Dendritic cell treated with granulocyte-macrophage colony-stimulating factor and Interleukin-4, amounts not matched to agents 40 ng/mL and 50 ng/mL, for 4 days (primary cell): ENCODE measurements at regions of chr6 and their contacts with region 1.

Region 1: DNA sequence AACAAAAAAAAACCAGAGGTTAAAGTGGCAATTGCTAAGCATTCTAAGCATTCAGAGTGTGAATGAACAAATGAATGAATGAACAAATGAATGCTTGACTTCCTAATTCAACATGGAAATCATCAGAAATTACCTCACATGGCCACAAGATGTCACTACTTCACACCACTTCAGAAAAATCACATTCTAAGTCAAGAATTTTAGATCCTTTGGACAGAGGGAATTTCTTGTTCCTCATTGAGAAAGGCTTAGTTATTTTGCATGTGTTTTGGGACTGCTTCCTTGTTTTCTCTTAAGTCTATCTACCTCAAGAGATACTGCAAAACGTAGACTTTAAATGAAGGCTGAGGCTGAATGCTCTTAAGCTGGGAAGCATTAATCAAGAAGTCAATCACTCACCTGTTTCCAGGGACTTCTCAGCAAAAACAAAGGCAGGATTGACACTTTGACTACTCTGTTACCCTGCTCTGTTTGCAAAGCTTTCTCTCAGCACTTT is 120.2 kb downstream of the MBOAT1 start:
- H3K4me3 Mint-ChIP-seq: no peak overlapping the region
- H3K27ac Mint-ChIP-seq: no peak overlapping the region
- H3K4me1 Mint-ChIP-seq: no peaks in the 10 kb centered on the region
- H3K27me3 Mint-ChIP-seq: no peaks in the 10 kb centered on the region

Region 2: GRCh38 chr6:20061952-20062351 is 30.2 kb before region 1 on chr6:
- intact Hi-C with region 1: no loop called
- H3K4me3 Mint-ChIP-seq: no peak overlapping the region
- H3K27ac Mint-ChIP-seq: no peak overlapping the region
- H3K4me1 Mint-ChIP-seq: peaks cover 6% of the 10 kb centered on the region
- H3K27me3 Mint-ChIP-seq: no peaks in the 10 kb centered on the region

Region 3: GRCh38 chr6:20126789-20127653 is 34.9 kb after region 1 on chr6:
- intact Hi-C with region 1: loop called (anchors 2 kb)
- H3K4me3 Mint-ChIP-seq: no peak overlapping the region
- H3K27ac Mint-ChIP-seq: no peak overlapping the region
- H3K4me1 Mint-ChIP-seq: no peaks in the 10 kb centered on the region
- H3K27me3 Mint-ChIP-seq: no peaks in the 10 kb centered on the region

Region 4: GRCh38 chr6:20271818-20272217 is 179.7 kb after region 1 on chr6:
- intact Hi-C with region 1: loop called (anchors 2 kb)
- H3K4me3 Mint-ChIP-seq: no peak overlapping the region
- H3K27ac Mint-ChIP-seq: no peak overlapping the region
- H3K4me1 Mint-ChIP-seq: peaks cover 13% of the 10 kb centered on the region
- H3K27me3 Mint-ChIP-seq: no peaks in the 10 kb centered on the region

Region 5: DNA sequence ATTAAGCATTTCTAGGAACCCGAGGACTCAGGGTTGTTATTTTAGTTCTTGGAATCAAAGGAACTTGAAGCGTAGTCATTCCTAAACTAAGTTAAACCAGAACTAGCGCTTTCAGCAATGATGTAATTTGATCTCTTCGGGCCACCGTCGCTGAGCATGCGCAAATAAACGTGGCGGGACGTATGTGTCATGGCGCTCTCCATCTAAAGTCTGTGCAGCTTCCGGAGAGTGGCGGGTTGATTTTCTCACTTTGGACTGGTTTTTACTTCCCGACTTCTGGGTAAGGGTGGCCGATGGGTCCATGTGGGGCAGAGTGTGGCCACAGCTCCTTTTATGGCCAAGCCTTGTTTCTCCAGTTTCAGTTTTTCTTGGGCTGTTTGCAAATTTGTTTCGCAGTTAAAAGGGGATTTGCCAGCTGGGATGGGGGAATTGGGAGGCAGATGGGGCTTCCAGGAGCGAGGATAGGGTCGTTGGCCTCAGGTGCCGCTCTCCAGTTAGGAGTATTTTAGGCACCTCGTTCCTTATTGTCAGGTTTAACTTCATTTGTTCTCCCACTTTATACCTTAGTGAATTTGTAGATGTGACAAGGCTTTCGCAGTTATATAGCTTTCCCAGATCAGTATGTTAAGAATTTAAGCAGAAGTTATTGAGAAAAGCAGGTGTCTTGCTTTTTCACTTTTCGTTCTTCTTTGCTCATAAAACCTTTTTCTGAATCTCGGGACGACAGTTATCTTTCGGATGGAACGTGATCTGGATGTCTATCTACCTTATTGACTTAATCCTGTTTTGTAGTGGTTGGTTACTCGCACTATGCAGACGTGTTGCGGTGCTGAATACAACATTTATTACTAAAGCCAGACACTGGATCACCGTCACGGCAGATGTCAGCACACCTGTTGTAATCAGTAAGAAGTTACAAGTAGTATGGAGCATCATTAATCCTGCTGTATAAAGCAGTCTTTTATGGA is 442.5 kb after region 1 on chr6 and contains the start of gene CDKAL1:
- intact Hi-C with region 1: loop called (anchors 5 kb)
- H3K4me3 Mint-ChIP-seq: peak within 1 kb of the TSS; percentile 92
- H3K27ac Mint-ChIP-seq: peak within 1 kb of the TSS; percentile 94
- H3K4me1 Mint-ChIP-seq: peaks cover 36% of the 10 kb centered on the region
- H3K27me3 Mint-ChIP-seq: no peaks in the 10 kb centered on the region